ENCODE measurements at regions of chr7 and their contacts with region 1.

Region 1: DNA sequence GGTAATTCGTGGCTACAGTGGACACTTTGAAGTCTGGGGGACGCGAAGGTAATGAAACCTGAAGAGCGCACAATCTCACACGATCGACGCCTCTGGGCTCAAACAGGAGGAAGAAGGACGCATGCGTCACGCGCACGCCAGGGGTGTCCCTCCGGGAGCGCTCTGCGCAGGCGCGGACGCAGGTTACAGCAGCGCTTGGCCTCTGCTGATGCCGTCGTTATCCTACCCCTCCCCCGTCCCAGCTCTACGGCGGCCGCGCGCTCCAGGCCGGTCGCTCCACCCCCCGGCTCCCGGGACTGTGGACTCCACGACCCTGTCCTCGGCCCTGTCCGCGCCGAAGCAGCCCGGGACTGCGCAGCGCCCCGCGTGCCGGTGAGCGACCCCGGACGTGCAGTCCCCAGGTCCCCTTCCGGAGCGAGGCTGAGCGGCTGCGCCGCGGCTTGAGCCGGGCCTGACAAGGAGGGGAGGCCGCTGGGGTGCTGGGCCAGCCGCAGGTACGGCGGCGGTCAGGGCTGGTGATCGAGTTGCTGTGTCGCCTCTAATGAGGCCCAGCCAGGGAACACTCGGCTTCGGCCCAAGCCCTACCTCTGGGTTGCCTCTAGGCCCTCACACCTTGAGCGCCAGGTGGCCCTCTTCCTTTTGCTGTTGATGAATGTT is at the start of gene TMEM106B:
- DNase-seq: peak; percentile 97
- ATAC-seq: peak; percentile 87
- H3K4me3 ChIP-seq: peak within 1 kb of the TSS; percentile 80
- H3K27ac ChIP-seq: peak within 1 kb of the TSS; percentile 70
- H3K4me1 ChIP-seq: peaks cover 36% of the 10 kb centered on the region
- H3K27me3 ChIP-seq: no peaks in the 10 kb centered on the region
- CTCF ChIP-seq: peak; percentile 39; the same call in 1 of the 2 replicates
- total RNA-seq, gene TMEM106B: 32.5 and 41.6 TPM in 2 replicates

Region 2: GRCh38 chr7:12162415-12163113 is 48.6 kb before region 1 on chr7:
- CTCF ChIA-PET with region 1: no interaction called
- POLR2A ChIA-PET with region 1: interaction called, 3 read pairs
- intact Hi-C with region 1: loop called (anchors 2 kb)
- DNase-seq: peak; percentile 90
- ATAC-seq: peak; percentile 88
- H3K4me3 ChIP-seq: no peak overlapping the region
- H3K27ac ChIP-seq: peak overlapping the region; percentile 79
- H3K4me1 ChIP-seq: peaks cover 36% of the 10 kb centered on the region
- H3K27me3 ChIP-seq: no peaks in the 10 kb centered on the region
- CTCF ChIP-seq: no peak

Region 3: DNA sequence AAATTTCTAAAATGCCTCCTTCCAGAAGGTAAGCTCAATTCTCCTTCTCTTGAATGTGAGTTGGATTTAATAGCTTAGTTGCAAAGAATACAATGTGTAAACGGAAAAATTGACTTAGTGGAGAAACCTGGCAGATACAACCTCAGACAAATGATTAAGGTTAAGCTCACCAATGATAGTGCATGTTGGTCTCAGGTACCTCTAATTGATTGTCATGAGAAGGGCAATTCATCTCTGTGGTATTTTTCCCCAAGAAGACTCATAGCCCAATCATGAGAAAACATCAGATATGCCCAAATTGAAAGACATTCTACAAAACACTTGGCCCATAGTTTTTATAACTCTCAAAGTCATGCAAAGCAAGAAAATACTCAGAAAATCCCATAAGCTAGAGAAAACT is 36.3 kb before region 1 on chr7:
- CTCF ChIA-PET with region 1: no interaction called
- POLR2A ChIA-PET with region 1: no interaction called
- intact Hi-C with region 1: no loop called
- DNase-seq: peak; percentile 73
- ATAC-seq: peak; percentile 64
- H3K4me3 ChIP-seq: no peak overlapping the region
- H3K27ac ChIP-seq: peak overlapping the region; percentile 53
- H3K4me1 ChIP-seq: peaks cover 22% of the 10 kb centered on the region
- H3K27me3 ChIP-seq: no peaks in the 10 kb centered on the region
- CTCF ChIP-seq: no peak

Region 4: DNA sequence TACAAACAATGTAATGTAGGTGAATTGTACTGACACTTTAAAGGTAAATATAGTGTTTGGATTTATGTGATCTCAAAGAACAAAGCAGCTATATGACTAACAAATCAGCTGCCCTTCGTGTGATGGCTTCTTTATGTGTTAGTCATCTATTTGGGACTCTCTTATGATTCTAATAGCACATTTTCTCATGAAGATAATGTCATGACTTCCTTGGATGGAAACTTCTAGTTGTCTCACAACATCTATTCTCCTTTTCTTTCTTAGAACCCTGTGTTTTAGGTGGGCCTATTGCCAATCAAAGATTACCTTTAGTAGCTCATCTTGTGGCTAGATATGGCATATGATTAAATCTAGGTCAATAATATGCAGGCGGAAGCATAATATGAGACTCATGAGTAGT is 44.9 kb after region 1 on chr7:
- CTCF ChIA-PET with region 1: no interaction called
- POLR2A ChIA-PET with region 1: interaction called, 10 read pairs
- intact Hi-C with region 1: no loop called
- DNase-seq: peak; percentile 43
- ATAC-seq: peak; percentile 95
- H3K4me3 ChIP-seq: no peak overlapping the region
- H3K27ac ChIP-seq: peak overlapping the region; percentile 43
- H3K4me1 ChIP-seq: peaks cover 12% of the 10 kb centered on the region; the same call in 1 of the 2 replicates
- H3K27me3 ChIP-seq: no peaks in the 10 kb centered on the region
- CTCF ChIP-seq: no peak